ENCODE measurements at regions of chr9 and their contacts with region 1.

Region 1: DNA sequence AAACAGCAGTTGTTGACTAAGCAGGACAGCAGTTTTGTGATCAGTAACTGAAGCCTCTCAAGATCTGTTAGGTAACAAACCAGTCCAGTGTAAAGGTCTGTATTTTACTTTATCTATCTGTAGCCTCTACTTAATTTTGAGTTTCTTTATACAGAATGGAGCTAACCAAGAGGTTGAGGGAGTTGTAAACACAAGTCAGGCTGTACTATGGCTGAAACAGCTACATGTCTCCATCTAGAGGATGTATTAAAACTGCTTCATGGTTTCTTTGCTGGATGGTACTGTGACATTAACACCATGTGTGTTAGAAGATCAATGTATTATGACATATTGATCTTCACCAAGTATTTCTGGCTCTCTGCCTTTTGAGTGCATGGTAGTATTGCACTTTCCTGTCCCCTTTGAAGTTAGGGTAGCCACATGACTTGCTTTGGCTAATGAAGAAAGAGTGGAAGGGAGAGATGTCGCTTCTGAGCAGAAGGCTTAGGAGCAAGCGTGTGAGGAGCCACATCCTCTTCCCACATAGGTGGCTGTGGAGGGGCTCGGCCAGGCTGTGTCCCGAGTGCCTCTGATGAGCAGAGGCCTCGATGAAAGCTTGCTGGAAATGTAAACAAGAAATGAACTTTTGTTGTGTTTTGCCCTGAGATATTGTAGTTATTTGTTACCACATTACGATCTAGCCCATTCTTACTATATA is 105.6 kb upstream of the PCA3 start:
- DNase-seq: no peak
- ATAC-seq: peak; percentile 93
- H3K4me3 ChIP-seq: no peak overlapping the region
- H3K27ac ChIP-seq: no peak overlapping the region
- H3K4me1 ChIP-seq: no peaks in the 10 kb centered on the region; the same call in 1 of the 2 replicates
- H3K27me3 ChIP-seq: 0 out of 4 replicates have a peak, but pooled peaks cover 0 to 2% of the 10 kb centered on the region in 2 experiments
- CTCF ChIP-seq: peak; percentile 39 to 73 (median 72); a peak in 5 of 6 replicates
- EP300 ChIP-seq: no peak
- POLR2A ChIP-seq: no peak
- RAD21 ChIP-seq: peak; percentile 90

Region 2: GRCh38 chr9:76219560-76220152 is 439.0 kb before region 1 on chr9:
- CTCF ChIA-PET with region 1: no interaction called
- POLR2A ChIA-PET with region 1: no interaction called
- RAD21 ChIA-PET with region 1: no interaction called
- SMC1A ChIA-PET with region 1: no interaction called
- in situ Hi-C with region 1: no loop called
- intact Hi-C with region 1: no loop called
- DNase-seq: no peak
- ATAC-seq: no peak
- H3K4me3 ChIP-seq: no peak overlapping the region
- H3K27ac ChIP-seq: no peak overlapping the region
- H3K4me1 ChIP-seq: no peaks in the 10 kb centered on the region
- H3K27me3 ChIP-seq: no peaks in the 10 kb centered on the region; a peak in 1 of 4 replicates
- CTCF ChIP-seq: no peak
- EP300 ChIP-seq: no peak
- POLR2A ChIP-seq: no peak
- RAD21 ChIP-seq: no peak

Region 3: GRCh38 chr9:76393963-76394679 is 264.6 kb before region 1 on chr9 and contains the start of gene RFK:
- CTCF ChIA-PET with region 1: interaction called, 3 read pairs
- POLR2A ChIA-PET with region 1: no interaction called
- RAD21 ChIA-PET with region 1: interaction called, 12 read pairs
- SMC1A ChIA-PET with region 1: interaction called, 11 read pairs
- in situ Hi-C with region 1: no loop called
- intact Hi-C with region 1: no loop called
- DNase-seq: peak; percentile 48
- ATAC-seq: peak; percentile 89
- H3K4me3 ChIP-seq: peak within 1 kb of the TSS; percentile 94
- H3K27ac ChIP-seq: peak within 1 kb of the TSS; percentile 54
- H3K4me1 ChIP-seq: peaks cover 4% of the 10 kb centered on the region; the same call in 1 of the 2 replicates
- H3K27me3 ChIP-seq: no peaks in the 10 kb centered on the region
- CTCF ChIP-seq: peak; percentile 42 to 64 (median 46); a peak in 4 of 6 replicates
- EP300 ChIP-seq: no peak
- POLR2A ChIP-seq: peak; percentile 81
- RAD21 ChIP-seq: peak; percentile 62
- polyA plus RNA-seq, gene RFK: 4.4 to 7.9 TPM

Region 4: GRCh38 chr9:76403352-76403751 is 255.3 kb before region 1 on chr9:
- CTCF ChIA-PET with region 1: interaction called, 6 read pairs
- POLR2A ChIA-PET with region 1: no interaction called
- RAD21 ChIA-PET with region 1: no interaction called
- SMC1A ChIA-PET with region 1: interaction called, 4 read pairs
- in situ Hi-C with region 1: no loop called
- intact Hi-C with region 1: loop called (anchors 5 kb)
- DNase-seq: peak; percentile 55
- ATAC-seq: peak; percentile 88
- H3K4me3 ChIP-seq: no peak overlapping the region; the same call in 1 of the 2 replicates
- H3K27ac ChIP-seq: no peak overlapping the region
- H3K4me1 ChIP-seq: peaks cover 10% of the 10 kb centered on the region
- H3K27me3 ChIP-seq: no peaks in the 10 kb centered on the region
- CTCF ChIP-seq: peak; percentile 33 to 63 (median 56); a peak in 5 of 6 replicates
- EP300 ChIP-seq: no peak
- POLR2A ChIP-seq: no peak
- RAD21 ChIP-seq: peak; percentile 74

Region 5: DNA sequence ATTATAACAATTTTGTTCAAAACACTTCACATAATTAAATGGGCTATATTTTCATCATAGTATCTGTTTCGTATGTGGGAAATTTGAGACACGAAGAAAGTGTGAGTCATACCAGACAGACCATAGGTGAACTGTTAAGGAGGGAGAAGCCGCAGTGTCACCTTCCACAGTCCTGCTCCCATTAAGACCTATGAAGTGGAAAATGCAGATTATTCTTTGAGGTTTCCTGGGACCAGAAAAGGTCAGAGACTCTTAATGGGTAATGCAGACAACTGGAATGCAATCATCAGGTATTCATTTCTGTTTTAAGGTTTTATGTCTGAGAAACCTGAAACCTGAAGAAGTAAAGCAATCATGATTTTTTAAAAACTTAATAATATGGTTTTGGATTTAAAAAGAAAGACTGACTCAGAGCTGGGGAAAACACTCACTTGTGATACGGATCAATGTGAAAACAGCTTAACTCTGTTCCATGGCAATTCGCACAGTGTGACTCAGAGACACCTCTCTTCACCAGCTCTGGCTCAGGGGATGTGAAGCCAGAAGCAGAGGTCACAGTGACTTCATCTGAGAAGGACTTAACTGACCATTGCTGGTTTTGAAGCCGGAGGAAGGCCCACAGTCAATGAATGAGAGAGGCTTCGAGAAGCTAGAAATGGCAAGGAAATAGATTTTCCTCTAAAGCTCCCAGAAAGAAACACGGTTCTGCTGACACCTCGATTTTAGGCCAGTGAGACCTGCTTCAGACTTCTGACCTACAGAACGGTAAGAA is 216.9 kb before region 1 on chr9:
- CTCF ChIA-PET with region 1: interaction called, 30 read pairs
- POLR2A ChIA-PET with region 1: no interaction called
- RAD21 ChIA-PET with region 1: interaction called, 7 read pairs
- SMC1A ChIA-PET with region 1: interaction called, 33 read pairs
- in situ Hi-C with region 1: loop called (anchors 5 kb)
- intact Hi-C with region 1: no loop called
- DNase-seq: peak; percentile 72
- ATAC-seq: peak; percentile 78
- H3K4me3 ChIP-seq: peak overlapping the region; percentile 10; the same call in 1 of the 2 replicates
- H3K27ac ChIP-seq: peak overlapping the region; percentile 82
- H3K4me1 ChIP-seq: peaks cover 40% of the 10 kb centered on the region
- H3K27me3 ChIP-seq: no peaks in the 10 kb centered on the region
- CTCF ChIP-seq: no peak
- EP300 ChIP-seq: peak; percentile 71 to 80
- POLR2A ChIP-seq: no peak
- RAD21 ChIP-seq: no peak

Region 6: GRCh38 chr9:76451234-76451633 is 207.4 kb before region 1 on chr9:
- CTCF ChIA-PET with region 1: interaction called, 30 read pairs
- POLR2A ChIA-PET with region 1: no interaction called
- RAD21 ChIA-PET with region 1: interaction called, 7 read pairs
- SMC1A ChIA-PET with region 1: interaction called, 33 read pairs
- in situ Hi-C with region 1: loop called (anchors 5 kb)
- intact Hi-C with region 1: loop called (anchors 1 kb)
- DNase-seq: no peak
- ATAC-seq: no peak
- H3K4me3 ChIP-seq: no peak overlapping the region
- H3K27ac ChIP-seq: no peak overlapping the region
- H3K4me1 ChIP-seq: 0 out of 2 replicates have a peak, but pooled peaks cover 2% of the 10 kb centered on the region
- H3K27me3 ChIP-seq: no peaks in the 10 kb centered on the region
- CTCF ChIP-seq: no peak
- EP300 ChIP-seq: no peak
- POLR2A ChIP-seq: no peak
- RAD21 ChIP-seq: no peak

Region 7: DNA sequence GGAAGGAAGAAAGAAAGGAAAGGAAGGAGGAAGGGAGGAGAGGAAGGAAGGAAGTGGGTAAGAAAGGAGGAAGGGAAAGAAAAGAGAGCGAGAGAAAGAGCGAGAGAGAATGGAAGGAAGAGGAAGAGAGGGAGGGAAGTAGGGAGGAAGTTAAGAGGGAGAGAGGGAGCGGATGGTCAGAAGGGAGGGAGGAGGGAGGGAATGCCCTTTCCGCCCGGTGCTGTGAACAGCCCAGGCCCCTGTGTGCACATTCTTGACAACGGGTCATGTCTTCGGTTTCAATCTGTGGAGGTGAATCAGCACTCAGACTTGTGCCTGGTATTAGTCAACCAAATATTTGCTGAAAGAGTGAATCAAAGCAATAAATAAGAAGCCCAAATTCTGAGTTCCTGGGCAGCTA is 208.0 kb after region 1 on chr9:
- CTCF ChIA-PET with region 1: no interaction called
- POLR2A ChIA-PET with region 1: no interaction called
- RAD21 ChIA-PET with region 1: no interaction called
- SMC1A ChIA-PET with region 1: no interaction called
- in situ Hi-C with region 1: no loop called
- intact Hi-C with region 1: no loop called
- DNase-seq: no peak
- ATAC-seq: no peak
- H3K4me3 ChIP-seq: no peak overlapping the region
- H3K27ac ChIP-seq: no peak overlapping the region
- H3K4me1 ChIP-seq: no peaks in the 10 kb centered on the region
- H3K27me3 ChIP-seq: no peaks in the 10 kb centered on the region
- CTCF ChIP-seq: no peak
- EP300 ChIP-seq: no peak
- POLR2A ChIP-seq: no peak
- RAD21 ChIP-seq: no peak

Measured in GM12878 (cell line).